Posterior vena cava (tissue), 2 donors: ENCODE measurements at regions of chr7 and their contacts with region 1.

Region 1: DNA sequence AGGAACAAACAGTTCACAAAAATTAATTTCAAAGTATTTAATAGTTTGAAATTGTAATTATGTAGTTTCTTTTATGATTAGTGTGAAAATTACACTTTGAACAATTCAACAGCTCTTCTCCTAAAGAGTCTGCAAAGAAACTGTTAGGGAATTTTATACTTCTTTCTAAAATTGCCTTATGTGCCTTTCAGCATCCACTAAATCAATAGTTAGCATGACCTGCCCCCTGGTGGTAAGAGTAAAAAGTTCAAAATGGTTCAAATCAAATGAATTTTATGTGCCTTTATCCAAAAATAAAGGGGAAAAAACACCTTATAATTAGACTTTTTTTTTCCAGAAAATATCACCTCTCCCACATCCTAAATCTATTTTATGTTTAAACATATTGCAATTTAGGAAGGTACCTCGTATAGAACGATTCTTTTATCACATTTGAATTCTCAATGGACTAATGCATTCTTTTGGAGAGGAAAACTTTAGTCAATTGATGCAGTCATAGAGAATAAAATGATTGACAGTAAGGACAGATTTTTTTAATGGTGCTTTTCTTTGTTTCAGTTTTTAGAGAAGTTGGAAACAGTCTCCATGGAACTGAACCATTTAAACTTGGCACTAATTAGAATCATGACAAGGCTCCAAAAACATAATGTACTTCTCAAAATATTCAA is 163.7 kb downstream of the SEMA3D start:
- DNase-seq: no peak

Region 2: DNA sequence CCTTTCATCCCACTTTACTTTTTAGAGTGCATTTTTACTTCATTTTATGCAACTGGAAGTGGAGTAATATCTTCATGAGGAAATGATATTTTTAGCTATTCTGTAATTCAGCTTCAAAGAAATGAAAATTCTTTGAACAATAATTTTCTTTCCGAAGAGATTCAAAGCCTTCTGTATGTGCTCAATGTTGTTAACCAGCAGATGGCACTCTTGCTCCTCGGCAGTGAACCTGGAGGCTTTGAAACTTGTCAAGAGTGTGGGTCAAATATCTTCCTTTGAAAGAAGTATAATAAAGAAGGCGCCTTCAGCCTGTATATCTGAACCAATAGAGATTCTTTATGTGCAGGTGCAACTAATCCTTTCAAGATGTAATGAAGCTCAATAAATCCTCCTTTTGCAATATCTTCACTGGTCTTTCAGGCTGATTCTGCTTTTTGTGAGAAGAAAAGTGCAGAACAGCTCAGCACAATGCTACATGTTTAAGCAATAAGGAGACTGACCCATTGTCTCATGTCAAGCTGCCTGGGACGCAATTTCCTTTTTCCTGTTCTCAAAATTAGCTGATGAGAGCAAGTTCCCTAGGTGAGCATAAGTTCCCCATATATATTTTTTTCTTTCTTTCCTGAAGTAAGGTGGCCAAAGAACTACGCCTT is 1087.0 kb before region 1 on chr7:
- intact Hi-C with region 1: loop called in 1 of 2 experiments (anchors 10 kb)
- DNase-seq: no peak

Region 3: DNA sequence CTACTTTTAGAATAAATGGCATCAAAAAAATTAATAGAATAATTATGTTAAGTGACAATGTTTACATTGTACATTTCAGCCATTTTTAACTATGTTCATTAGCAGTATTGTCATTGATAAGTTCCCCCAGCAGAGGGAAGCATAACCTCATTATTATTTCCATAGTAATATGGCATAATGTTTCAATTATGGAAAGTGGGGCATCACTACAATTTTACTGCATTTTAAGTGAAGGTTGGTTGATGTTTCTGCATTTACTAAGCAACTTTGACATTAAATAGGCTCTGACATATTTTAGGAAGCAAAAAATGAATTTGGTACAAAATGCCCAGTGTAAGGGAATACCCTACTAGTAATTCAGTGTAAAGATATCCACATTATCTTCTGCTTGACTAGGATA is 1046.9 kb before region 1 on chr7:
- intact Hi-C with region 1: loop called (anchors 5 kb)
- DNase-seq: no peak

Region 4: GRCh38 chr7:84490661-84491060 is 532.5 kb before region 1 on chr7:
- intact Hi-C with region 1: loop called in 1 of 2 experiments (anchors 10 kb)
- DNase-seq: no peak

Region 5: GRCh38 chr7:85046534-85046933 is 23.4 kb after region 1 on chr7:
- intact Hi-C with region 1: no loop called
- DNase-seq: no peak

Region 6: DNA sequence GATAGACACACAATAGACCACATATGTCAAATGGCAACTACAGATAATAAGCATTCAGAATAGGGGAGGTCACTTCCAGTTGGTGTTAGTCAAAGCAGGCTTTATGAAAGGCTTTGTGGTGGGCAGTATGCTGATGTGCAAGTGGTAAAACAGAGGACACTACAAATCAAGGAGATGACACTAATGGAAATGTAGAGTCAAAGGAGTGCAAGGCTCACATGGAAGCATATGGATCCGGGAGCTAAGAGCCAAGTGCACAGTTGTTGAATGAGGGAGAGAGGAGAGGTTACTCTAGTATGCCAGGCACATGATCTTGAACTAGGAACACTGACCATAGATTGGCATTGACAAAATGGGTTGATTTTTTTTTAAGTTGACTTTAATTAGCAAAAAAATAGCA is 1683.2 kb after region 1 on chr7:
- intact Hi-C with region 1: no loop called
- DNase-seq: no peak